Activated B cell treated with CpG ODN at 0.5 μM for 24 hours (primary cell): ENCODE measurements at regions of chr3 and their contacts with region 1.

Region 1: GRCh38 chr3:177359593-177360357 is 162.5 kb upstream of the TBL1XR1 start:
- DNase-seq: peak; percentile 98
- ATAC-seq: peak; percentile 74
- H3K4me3 Mint-ChIP-seq: peak overlapping the region; percentile 85
- H3K27ac Mint-ChIP-seq: peak overlapping the region; percentile 98
- H3K4me1 Mint-ChIP-seq: peaks cover 67% of the 10 kb centered on the region
- H3K27me3 Mint-ChIP-seq: no peaks in the 10 kb centered on the region
- CTCF ChIP-seq: no peak

Region 2: DNA sequence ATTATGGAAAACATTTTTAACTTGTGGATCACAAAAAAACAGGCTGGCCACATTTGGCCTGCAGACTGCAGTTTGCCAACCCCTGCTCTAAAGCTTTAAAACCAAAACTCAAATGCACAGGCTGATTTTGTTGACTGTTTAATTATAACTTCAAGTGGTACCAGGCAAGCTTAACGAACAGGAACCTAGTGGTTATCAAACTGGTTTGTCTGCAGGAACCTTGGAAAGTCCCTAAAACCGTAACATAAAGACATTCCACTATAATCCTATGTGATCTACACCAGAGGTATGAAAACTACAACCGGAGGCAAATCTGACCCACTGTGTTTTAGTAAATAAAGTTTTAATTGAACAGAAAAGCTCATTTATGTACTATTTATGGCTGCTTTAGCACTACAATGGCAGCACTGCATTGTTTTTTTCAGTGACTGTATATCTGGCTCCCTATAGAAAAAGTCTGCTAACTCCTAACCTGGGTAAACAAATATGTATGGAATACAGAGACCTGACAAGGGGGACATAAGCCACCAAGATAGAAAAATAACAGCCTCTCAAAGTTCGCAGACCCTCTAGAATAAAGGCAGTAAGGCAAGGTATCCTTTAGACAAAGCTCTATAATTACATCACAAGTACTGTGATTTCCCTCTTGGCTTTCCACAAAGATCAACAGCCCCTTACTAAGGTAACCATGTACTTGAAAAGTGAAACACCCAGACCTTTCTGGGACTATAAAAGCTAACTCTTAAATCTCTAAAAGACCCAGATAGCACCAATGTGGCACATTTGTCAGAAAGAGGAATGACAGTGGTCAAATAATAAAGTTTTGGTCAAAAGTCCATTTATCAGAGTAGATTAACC is 214.6 kb before region 1 on chr3:
- CTCF ChIA-PET with region 1: no interaction called
- POLR2A ChIA-PET with region 1: interaction called, 3 read pairs
- intact Hi-C with region 1: loop called (anchors 1 kb)
- DNase-seq: no peak
- ATAC-seq: peak; percentile 68
- H3K4me3 Mint-ChIP-seq: peak overlapping the region; percentile 54
- H3K27ac Mint-ChIP-seq: peak overlapping the region; percentile 83
- H3K4me1 Mint-ChIP-seq: peaks cover 90% of the 10 kb centered on the region
- H3K27me3 Mint-ChIP-seq: no peaks in the 10 kb centered on the region
- CTCF ChIP-seq: no peak

Region 3: DNA sequence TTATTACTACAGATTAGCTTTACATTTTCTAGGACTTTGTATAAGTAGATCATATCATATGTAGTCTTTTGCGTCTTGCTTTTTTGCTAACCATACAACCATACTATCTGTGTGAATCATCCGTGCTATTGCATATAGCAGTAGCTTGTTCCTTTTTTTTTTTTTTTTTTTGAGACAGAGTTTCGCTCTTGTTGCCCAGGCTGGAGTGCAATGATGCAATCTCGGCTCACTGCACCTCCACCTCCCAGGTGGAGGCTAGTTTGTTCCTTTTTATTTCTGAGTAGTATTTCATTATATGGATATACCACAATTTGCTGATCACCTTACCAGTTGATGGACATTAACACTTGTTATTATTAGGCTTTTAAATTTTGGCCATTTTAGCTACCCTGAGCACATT is 108.0 kb before region 1 on chr3:
- CTCF ChIA-PET with region 1: interaction called, 3 read pairs
- POLR2A ChIA-PET with region 1: interaction called, 16 read pairs
- intact Hi-C with region 1: loop called (anchors 1 kb)
- DNase-seq: no peak
- ATAC-seq: peak; percentile 64
- H3K4me3 Mint-ChIP-seq: no peak overlapping the region
- H3K27ac Mint-ChIP-seq: peak overlapping the region; percentile 79
- H3K4me1 Mint-ChIP-seq: peaks cover 36% of the 10 kb centered on the region
- H3K27me3 Mint-ChIP-seq: no peaks in the 10 kb centered on the region
- CTCF ChIP-seq: no peak

Region 4: GRCh38 chr3:177337541-177338331 is 22.0 kb before region 1 on chr3:
- CTCF ChIA-PET with region 1: interaction called, 5 read pairs
- POLR2A ChIA-PET with region 1: interaction called, 82 read pairs
- intact Hi-C with region 1: loop called (anchors 1 kb)
- DNase-seq: no peak
- ATAC-seq: peak; percentile 82
- H3K4me3 Mint-ChIP-seq: peak overlapping the region; percentile 67
- H3K27ac Mint-ChIP-seq: peak overlapping the region; percentile 98
- H3K4me1 Mint-ChIP-seq: peaks cover 61% of the 10 kb centered on the region
- H3K27me3 Mint-ChIP-seq: no peaks in the 10 kb centered on the region
- CTCF ChIP-seq: no peak

Region 5: GRCh38 chr3:177378168-177378567 is 18.4 kb after region 1 on chr3:
- CTCF ChIA-PET with region 1: interaction called, 4 read pairs
- POLR2A ChIA-PET with region 1: interaction called, 13 read pairs
- intact Hi-C with region 1: loop called (anchors 1 kb)
- DNase-seq: no peak
- ATAC-seq: peak; percentile 63
- H3K4me3 Mint-ChIP-seq: peak overlapping the region; percentile 46
- H3K27ac Mint-ChIP-seq: peak overlapping the region; percentile 69
- H3K4me1 Mint-ChIP-seq: peaks cover 55% of the 10 kb centered on the region
- H3K27me3 Mint-ChIP-seq: no peaks in the 10 kb centered on the region
- CTCF ChIP-seq: no peak

Region 6: DNA sequence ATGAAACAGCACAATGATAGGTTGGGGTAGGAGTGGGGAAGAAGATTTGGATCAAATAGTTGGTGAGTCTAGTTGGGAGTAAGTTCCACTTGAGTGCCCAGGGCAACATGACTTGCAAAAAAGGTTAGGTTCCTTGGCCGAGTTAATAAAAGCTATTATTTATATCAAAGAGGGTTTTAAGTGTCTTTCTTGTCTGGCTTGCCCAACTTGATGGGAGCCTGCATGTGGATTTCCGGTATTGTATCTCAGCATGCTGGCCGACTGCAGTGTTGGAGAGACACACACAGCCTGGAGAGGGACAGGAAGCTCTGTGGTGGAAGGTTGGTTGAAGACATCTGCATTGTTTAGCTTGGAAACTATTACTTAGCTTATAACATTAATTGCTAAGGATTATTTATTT is 287.0 kb after region 1 on chr3:
- CTCF ChIA-PET with region 1: no interaction called
- POLR2A ChIA-PET with region 1: no interaction called
- intact Hi-C with region 1: loop called (anchors 5 kb)
- DNase-seq: no peak
- ATAC-seq: no peak
- H3K4me3 Mint-ChIP-seq: no peak overlapping the region
- H3K27ac Mint-ChIP-seq: no peak overlapping the region
- H3K4me1 Mint-ChIP-seq: peaks cover 30% of the 10 kb centered on the region
- H3K27me3 Mint-ChIP-seq: no peaks in the 10 kb centered on the region
- CTCF ChIP-seq: no peak

Region 7: GRCh38 chr3:179133575-179133974 is 1773.8 kb after region 1 on chr3:
- CTCF ChIA-PET with region 1: no interaction called
- POLR2A ChIA-PET with region 1: no interaction called
- intact Hi-C with region 1: no loop called
- DNase-seq: no peak
- ATAC-seq: no peak
- H3K4me3 Mint-ChIP-seq: no peak overlapping the region
- H3K27ac Mint-ChIP-seq: no peak overlapping the region
- H3K4me1 Mint-ChIP-seq: peaks cover 10% of the 10 kb centered on the region
- H3K27me3 Mint-ChIP-seq: no peaks in the 10 kb centered on the region
- CTCF ChIP-seq: no peak